ENCODE measurements at regions of chr4 and their contacts with region 1.

Region 1: DNA sequence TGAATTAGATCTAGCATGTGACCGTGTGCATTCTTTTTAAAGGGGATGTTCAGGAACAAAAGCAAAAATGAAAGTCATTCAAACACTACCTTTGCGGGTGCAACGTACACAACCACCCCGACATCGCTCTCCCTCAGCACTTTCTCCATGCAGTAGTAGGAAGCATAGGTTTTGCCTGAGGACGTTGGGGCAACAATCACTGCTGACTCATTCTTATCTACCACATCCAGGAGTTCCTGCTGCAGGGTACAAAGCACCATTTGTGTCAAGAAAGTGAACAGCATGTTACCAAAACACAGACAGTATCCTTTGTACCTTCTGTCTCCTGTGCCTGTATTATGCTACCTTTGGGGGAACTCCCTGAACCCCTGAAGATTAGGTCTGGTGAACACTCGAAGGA is 58.6 kb downstream of the DDX60L start:
- DNase-seq: no peak
- ATAC-seq: peak; percentile 38
- H3K4me3 ChIP-seq: no peak overlapping the region
- H3K4me3 Mint-ChIP-seq: peak overlapping the region in 1 of 10 donors; percentile 22
- H3K27ac ChIP-seq: no peak overlapping the region
- H3K27ac Mint-ChIP-seq: peak overlapping the region in 3 of 9 donors; percentile 18 to 67 (median 53)
- H3K4me1 ChIP-seq: no peaks in the 10 kb centered on the region
- H3K4me1 Mint-ChIP-seq: peaks cover 0 to 18% (median 4%) of the 10 kb centered on the region in 7 donors
- H3K27me3 ChIP-seq: no peaks in the 10 kb centered on the region
- H3K27me3 Mint-ChIP-seq: no peaks in the 10 kb centered on the region

Region 2: GRCh38 chr4:167129146-167129545 is 1292.5 kb before region 1 on chr4:
- CTCF ChIA-PET with region 1: no interaction called
- POLR2A ChIA-PET with region 1: no interaction called
- intact Hi-C with region 1: no loop called
- DNase-seq: no peak
- ATAC-seq: no peak
- H3K4me3 ChIP-seq: no peak overlapping the region
- H3K4me3 Mint-ChIP-seq: no peak overlapping the region
- H3K27ac ChIP-seq: no peak overlapping the region
- H3K27ac Mint-ChIP-seq: no peak overlapping the region
- H3K4me1 ChIP-seq: no peaks in the 10 kb centered on the region
- H3K4me1 Mint-ChIP-seq: no peaks in the 10 kb centered on the region
- H3K27me3 ChIP-seq: no peaks in the 10 kb centered on the region
- H3K27me3 Mint-ChIP-seq: no peaks in the 10 kb centered on the region

Region 3: GRCh38 chr4:167973513-167973912 is 448.2 kb before region 1 on chr4:
- CTCF ChIA-PET with region 1: no interaction called
- POLR2A ChIA-PET with region 1: no interaction called
- intact Hi-C with region 1: no loop called
- DNase-seq: no peak
- ATAC-seq: no peak
- H3K4me3 ChIP-seq: no peak overlapping the region
- H3K4me3 Mint-ChIP-seq: no peak overlapping the region
- H3K27ac ChIP-seq: no peak overlapping the region
- H3K27ac Mint-ChIP-seq: no peak overlapping the region
- H3K4me1 ChIP-seq: no peaks in the 10 kb centered on the region
- H3K4me1 Mint-ChIP-seq: no peaks in the 10 kb centered on the region
- H3K27me3 ChIP-seq: no peaks in the 10 kb centered on the region
- H3K27me3 Mint-ChIP-seq: no peaks in the 10 kb centered on the region

Region 4: GRCh38 chr4:168433571-168433970 is 11.9 kb after region 1 on chr4:
- CTCF ChIA-PET with region 1: no interaction called
- POLR2A ChIA-PET with region 1: no interaction called
- intact Hi-C with region 1: no loop called
- DNase-seq: no peak
- ATAC-seq: no peak
- H3K4me3 ChIP-seq: no peak overlapping the region
- H3K4me3 Mint-ChIP-seq: no peak overlapping the region
- H3K27ac ChIP-seq: no peak overlapping the region
- H3K27ac Mint-ChIP-seq: peak overlapping the region in 1 of 9 donors; percentile 22
- H3K4me1 ChIP-seq: no peaks in the 10 kb centered on the region
- H3K4me1 Mint-ChIP-seq: peaks cover 0 to 6% (median 0%) of the 10 kb centered on the region in 7 donors
- H3K27me3 ChIP-seq: no peaks in the 10 kb centered on the region
- H3K27me3 Mint-ChIP-seq: no peaks in the 10 kb centered on the region

Region 5: GRCh38 chr4:168475745-168476144 is 54.1 kb after region 1 on chr4:
- CTCF ChIA-PET with region 1: no interaction called
- POLR2A ChIA-PET with region 1: no interaction called
- intact Hi-C with region 1: loop called in 1 of 2 experiments (anchors 5 kb)
- DNase-seq: no peak
- ATAC-seq: no peak
- H3K4me3 ChIP-seq: no peak overlapping the region
- H3K4me3 Mint-ChIP-seq: peak overlapping the region in 6 of 10 donors; percentile 10 to 94 (median 19)
- H3K27ac ChIP-seq: peak overlapping the region; percentile 18
- H3K27ac Mint-ChIP-seq: peak overlapping the region in 1 of 9 donors; percentile 52
- H3K4me1 ChIP-seq: peaks cover 6 to 18% of the 10 kb centered on the region in 2 donors
- H3K4me1 Mint-ChIP-seq: peaks cover 37 to 74% (median 69%) of the 10 kb centered on the region in 7 donors
- H3K27me3 ChIP-seq: no peaks in the 10 kb centered on the region
- H3K27me3 Mint-ChIP-seq: no peaks in the 10 kb centered on the region

Region 6: DNA sequence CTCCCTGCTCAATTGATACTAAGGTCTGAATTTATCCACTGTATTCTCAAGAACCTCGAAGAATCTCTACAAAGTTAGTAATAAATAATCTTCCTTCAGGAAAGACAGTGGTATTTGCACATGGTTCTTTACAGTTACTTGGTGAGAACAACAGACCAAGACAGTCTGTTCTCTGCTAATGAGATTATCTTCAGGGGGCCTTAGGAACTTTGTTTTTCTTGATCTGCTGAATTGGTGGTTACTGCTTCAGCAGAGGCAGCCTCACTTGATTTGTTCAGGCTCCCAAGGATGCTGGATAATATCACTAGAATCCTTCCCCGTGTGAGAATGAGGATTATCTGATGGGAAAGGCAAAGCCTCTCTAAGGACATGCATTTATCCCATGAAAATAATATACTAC is 523.6 kb after region 1 on chr4:
- CTCF ChIA-PET with region 1: no interaction called
- POLR2A ChIA-PET with region 1: no interaction called
- intact Hi-C with region 1: no loop called
- DNase-seq: no peak
- ATAC-seq: no peak
- H3K4me3 ChIP-seq: no peak overlapping the region
- H3K4me3 Mint-ChIP-seq: no peak overlapping the region
- H3K27ac ChIP-seq: no peak overlapping the region
- H3K27ac Mint-ChIP-seq: no peak overlapping the region
- H3K4me1 ChIP-seq: no peaks in the 10 kb centered on the region
- H3K4me1 Mint-ChIP-seq: peaks cover 0 to 1% (median 0%) of the 10 kb centered on the region in 7 donors
- H3K27me3 ChIP-seq: no peaks in the 10 kb centered on the region
- H3K27me3 Mint-ChIP-seq: peaks cover 0 to 2% (median 0%) of the 10 kb centered on the region in 5 donors